Activated CD4-positive, alpha-beta memory T cell treated with anti-CD3 and anti-CD28 coated beads for 36 hours (primary cell): ENCODE measurements at regions of chr15 and their contacts with region 1.

Region 1: DNA sequence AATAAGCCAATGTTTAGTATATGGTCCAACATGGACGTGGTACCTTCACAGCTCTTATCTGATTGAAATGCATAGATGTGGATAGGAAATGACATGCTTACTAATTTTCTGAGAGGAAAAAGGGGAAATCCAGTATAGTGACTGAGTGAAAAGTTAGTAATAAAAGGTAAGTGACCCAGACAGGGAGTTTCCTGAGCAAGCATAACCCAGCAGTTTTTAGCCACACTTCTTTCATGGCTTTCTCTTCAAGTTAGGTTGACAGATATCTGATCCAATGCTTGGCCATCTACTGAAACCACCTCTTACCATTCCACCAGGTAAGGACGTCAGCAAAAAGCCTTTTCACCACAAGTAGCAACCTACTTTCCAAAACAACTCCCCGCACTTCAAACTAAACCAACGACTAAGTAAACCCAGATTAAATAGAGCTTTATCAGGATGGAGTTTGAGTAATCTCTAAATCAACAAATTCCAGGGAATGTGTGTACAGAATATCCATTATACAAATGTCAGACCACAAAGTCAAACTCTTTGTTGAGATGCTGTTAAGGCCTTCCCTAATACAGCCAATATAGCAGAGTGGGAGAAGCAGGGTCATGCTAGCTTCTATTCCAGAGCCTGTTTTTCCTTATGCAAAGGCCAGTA is 329.7 kb downstream of the RORA start:
- DNase-seq: peak; percentile 48
- H3K4me3 Mint-ChIP-seq: no peak overlapping the region
- H3K27ac Mint-ChIP-seq: peak overlapping the region; percentile 57
- H3K4me1 Mint-ChIP-seq: peaks cover 64% of the 10 kb centered on the region
- H3K27me3 Mint-ChIP-seq: peaks cover 4% of the 10 kb centered on the region

Region 2: GRCh38 chr15:60389261-60390077 is 510.0 kb before region 1 on chr15:
- CTCF ChIA-PET with region 1: no interaction called
- POLR2A ChIA-PET with region 1: interaction called, 3 read pairs
- intact Hi-C with region 1: loop called (anchors 1 kb)
- DNase-seq: peak; percentile 63
- H3K4me3 Mint-ChIP-seq: peak overlapping the region; percentile 34
- H3K27ac Mint-ChIP-seq: peak overlapping the region; percentile 44
- H3K4me1 Mint-ChIP-seq: peaks cover 61% of the 10 kb centered on the region
- H3K27me3 Mint-ChIP-seq: no peaks in the 10 kb centered on the region

Region 3: DNA sequence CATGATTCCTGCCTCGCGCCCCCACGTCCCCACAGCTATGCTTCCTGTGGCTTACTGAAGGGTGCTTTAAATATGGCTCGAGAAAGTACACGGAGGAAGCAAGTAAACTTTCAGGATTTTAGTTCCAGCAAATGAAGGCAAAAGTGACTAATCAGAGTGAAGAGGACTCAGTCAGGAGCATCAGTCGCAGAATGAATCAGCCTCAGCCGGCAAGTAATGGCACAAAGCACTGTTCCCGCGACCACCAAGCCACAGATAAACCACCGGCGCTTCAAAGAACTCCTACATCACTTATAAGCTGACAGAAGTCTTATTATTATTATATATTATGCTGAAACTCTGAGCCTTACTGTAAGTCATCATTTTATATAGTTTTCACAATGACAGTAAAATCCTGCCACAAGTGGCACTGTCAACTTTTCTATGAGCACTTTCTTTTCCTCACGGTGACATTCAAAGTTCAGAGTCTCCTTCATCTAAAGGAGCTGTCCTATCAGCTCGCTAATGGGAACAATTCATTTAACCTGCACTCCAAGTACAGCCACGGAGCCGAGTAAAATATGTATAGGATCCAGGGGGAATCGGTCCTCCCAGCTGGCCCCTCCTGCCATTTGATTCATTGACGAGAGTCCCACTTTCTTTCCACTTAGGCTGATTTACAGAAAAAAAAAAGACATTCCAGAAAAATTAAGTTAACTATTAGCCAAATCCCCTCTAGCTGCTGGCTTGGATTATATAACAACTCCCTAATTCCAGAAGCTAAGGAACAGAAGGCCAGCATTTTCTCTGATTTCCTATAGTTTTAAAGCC is 203.5 kb before region 1 on chr15:
- CTCF ChIA-PET with region 1: interaction called, 5 read pairs
- POLR2A ChIA-PET with region 1: no interaction called
- intact Hi-C with region 1: loop called (anchors 1 kb)
- DNase-seq: peak; percentile 95
- H3K4me3 Mint-ChIP-seq: peak overlapping the region; percentile 57
- H3K27ac Mint-ChIP-seq: peak overlapping the region; percentile 80
- H3K4me1 Mint-ChIP-seq: peaks cover 84% of the 10 kb centered on the region
- H3K27me3 Mint-ChIP-seq: no peaks in the 10 kb centered on the region

Region 4: DNA sequence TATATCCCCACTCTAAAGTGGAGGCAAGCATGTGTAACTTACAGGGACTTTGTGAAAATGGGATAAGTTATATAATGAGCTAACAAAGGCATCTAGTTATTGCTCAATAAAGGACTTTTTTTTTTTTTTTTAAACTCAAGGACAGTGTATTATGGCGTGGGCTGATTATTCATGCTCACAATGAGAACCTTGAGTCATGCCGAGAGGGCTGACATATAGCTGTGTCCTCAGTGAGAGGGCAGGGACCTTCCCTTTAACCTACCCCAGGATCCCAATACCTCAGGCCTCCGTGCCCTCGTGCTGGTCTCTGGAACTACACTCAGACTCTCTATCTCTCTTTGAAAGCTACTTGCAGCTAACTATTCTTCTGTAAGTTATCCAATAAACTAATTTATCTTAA is 100.6 kb before region 1 on chr15:
- CTCF ChIA-PET with region 1: interaction called, 8 read pairs
- POLR2A ChIA-PET with region 1: interaction called, 7 read pairs
- intact Hi-C with region 1: loop called (anchors 1 kb)
- DNase-seq: peak; percentile 84
- H3K4me3 Mint-ChIP-seq: peak overlapping the region; percentile 28
- H3K27ac Mint-ChIP-seq: peak overlapping the region; percentile 82
- H3K4me1 Mint-ChIP-seq: peaks cover 90% of the 10 kb centered on the region
- H3K27me3 Mint-ChIP-seq: no peaks in the 10 kb centered on the region

Region 5: GRCh38 chr15:60865507-60865906 is 33.9 kb before region 1 on chr15:
- CTCF ChIA-PET with region 1: interaction called, 5 read pairs
- POLR2A ChIA-PET with region 1: no interaction called
- intact Hi-C with region 1: loop called (anchors 2 kb)
- DNase-seq: no peak
- H3K4me3 Mint-ChIP-seq: no peak overlapping the region
- H3K27ac Mint-ChIP-seq: no peak overlapping the region
- H3K4me1 Mint-ChIP-seq: peaks cover 21% of the 10 kb centered on the region
- H3K27me3 Mint-ChIP-seq: no peaks in the 10 kb centered on the region

Region 6: DNA sequence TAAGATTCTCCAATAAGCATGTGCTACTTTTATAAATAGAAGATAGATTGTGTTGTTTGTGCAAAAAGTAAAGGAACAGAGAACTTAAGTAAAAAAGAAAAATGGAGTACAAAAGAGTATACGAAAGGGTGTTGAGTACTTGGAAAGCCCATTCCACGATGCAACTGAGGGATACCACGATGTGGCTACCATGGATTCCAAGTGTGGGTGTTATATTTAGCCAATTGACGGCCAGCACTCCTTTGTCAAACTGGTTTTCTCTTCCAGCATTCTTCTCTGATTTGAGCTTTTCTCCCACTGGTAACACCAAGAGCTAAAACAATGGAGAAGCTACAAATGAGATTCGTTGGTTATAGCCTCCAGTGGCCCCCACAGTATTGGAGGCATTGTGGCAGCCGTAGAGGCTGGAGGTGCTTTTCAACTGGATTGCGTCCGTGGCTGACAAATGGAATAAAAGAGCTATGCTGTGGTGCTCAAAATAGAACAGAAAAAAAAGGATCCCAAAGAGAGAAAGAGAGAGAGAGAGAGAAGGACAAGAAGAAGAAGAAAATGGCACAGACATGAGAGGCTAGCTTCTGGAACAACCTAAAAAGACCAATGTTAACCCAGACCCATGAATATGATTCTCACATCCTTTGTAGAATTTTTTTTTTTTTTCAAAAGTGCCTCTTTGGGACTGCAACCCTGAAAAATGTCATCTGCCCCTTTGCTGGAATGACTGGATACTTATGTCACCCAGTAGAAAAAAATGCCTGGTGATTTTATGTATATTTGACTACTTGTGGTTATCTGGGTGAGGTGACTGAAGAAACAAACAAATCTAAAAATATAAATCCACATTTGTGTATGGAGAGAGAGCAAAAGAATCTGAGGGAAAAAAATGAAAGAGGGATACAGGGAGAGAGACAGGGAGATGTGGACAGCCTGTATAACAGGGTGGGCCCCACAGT is 15.5 kb before region 1 on chr15:
- CTCF ChIA-PET with region 1: no interaction called
- POLR2A ChIA-PET with region 1: no interaction called
- intact Hi-C with region 1: no loop called
- DNase-seq: no peak
- H3K4me3 Mint-ChIP-seq: no peak overlapping the region
- H3K27ac Mint-ChIP-seq: no peak overlapping the region
- H3K4me1 Mint-ChIP-seq: peaks cover 6% of the 10 kb centered on the region
- H3K27me3 Mint-ChIP-seq: peaks cover 7% of the 10 kb centered on the region

Region 7: GRCh38 chr15:60945196-60945595 is 45.8 kb after region 1 on chr15:
- CTCF ChIA-PET with region 1: no interaction called
- POLR2A ChIA-PET with region 1: no interaction called
- intact Hi-C with region 1: no loop called
- DNase-seq: no peak
- H3K4me3 Mint-ChIP-seq: no peak overlapping the region
- H3K27ac Mint-ChIP-seq: no peak overlapping the region
- H3K4me1 Mint-ChIP-seq: peaks cover 6% of the 10 kb centered on the region
- H3K27me3 Mint-ChIP-seq: peaks cover 40% of the 10 kb centered on the region

Region 8: DNA sequence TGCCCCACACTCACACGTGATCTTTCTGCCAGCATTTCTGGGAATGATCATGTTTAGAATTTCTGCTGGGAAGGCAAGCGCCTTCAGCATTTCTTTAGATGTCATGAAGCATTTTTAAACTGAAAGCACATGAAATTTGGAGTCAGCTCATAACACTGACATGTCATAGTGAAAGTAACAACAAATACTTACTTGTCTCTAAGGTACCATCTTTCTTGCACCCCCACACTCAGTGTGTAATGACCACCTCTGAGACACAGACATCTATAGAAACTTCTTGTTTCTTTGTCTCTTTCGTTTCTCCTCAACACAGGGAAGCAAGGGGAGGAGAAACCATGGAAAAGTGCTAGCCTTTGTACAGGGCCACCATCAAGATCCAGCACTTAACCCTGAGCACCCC is 157.9 kb after region 1 on chr15:
- CTCF ChIA-PET with region 1: no interaction called
- POLR2A ChIA-PET with region 1: no interaction called
- intact Hi-C with region 1: loop called (anchors 1 kb)
- DNase-seq: peak; percentile 28
- H3K4me3 Mint-ChIP-seq: no peak overlapping the region
- H3K27ac Mint-ChIP-seq: peak overlapping the region; percentile 46
- H3K4me1 Mint-ChIP-seq: peaks cover 13% of the 10 kb centered on the region
- H3K27me3 Mint-ChIP-seq: peaks cover 2% of the 10 kb centered on the region